ENCODE measurements at regions of chr12 and their contacts with region 1.

Region 1: DNA sequence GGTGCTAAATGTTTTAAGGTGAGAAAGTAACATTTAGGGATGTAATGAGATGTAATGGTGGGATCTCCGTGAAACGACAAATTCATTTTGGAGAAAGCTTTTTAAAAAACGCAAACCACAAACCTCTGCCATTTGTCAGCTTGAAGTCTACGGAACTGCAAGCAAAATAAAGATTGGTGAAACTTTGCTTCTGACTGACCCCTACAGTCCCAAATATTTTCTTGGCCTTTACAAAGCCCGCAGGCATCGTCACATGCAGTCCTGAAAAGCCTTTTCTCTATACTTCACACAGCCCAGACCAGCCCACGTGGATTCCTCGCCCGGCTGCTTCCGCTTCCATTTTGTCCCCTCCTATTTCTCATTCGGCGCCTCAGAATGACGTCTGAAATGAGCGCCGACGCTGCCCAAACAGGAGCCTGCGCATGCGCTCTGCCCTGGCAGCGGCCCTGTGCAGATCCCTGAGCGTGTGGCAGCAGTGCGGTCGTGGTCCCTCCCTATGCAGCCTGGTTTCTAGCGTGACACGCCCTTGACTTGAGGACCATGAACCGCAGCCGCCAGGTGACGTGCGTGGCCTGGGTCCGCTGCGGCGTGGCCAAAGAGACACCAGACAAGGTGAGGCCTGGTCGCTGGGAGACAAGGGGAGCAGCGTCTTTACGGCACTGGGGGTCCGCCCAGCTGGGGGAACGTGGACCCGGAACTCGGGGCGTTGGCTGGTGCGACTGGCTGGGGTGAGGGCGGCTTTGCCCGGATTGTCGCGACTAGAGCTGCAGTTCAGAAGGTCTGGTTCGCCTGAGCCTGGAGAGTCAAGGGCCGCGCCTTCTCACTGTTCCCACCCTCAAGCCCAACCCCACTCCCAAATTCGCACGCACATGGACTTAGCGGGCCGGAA is at the start of gene PWP1:
- DNase-seq: peak; percentile 91 to 99 (median 94)
- ATAC-seq: peak; percentile 90
- H3K4me3 ChIP-seq: peak within 1 kb of the TSS; percentile 99
- H3K4me3 Mint-ChIP-seq: peak within 1 kb of the TSS; percentile 97
- H3K27ac ChIP-seq: peak within 1 kb of the TSS; percentile 75 to 91
- H3K27ac Mint-ChIP-seq: peak within 1 kb of the TSS; percentile 94
- H3K4me1 ChIP-seq: peaks cover 24% of the 10 kb centered on the region
- H3K4me1 Mint-ChIP-seq: peaks cover 33% of the 10 kb centered on the region
- H3K27me3 ChIP-seq: no peaks in the 10 kb centered on the region
- H3K27me3 Mint-ChIP-seq: no peaks in the 10 kb centered on the region
- CTCF ChIP-seq: no peak
- total RNA-seq, gene PWP1: 24.1 to 24.2 TPM

Region 2: GRCh38 chr12:106247674-106248311 is 1437.8 kb before region 1 on chr12 and contains the start of gene CKAP4:
- CTCF ChIA-PET with region 1: no interaction called
- POLR2A ChIA-PET with region 1: no interaction called
- intact Hi-C with region 1: loop called in 1 of 2 experiments (anchors 10 kb)
- DNase-seq: peak; percentile 11 to 88 (median 54)
- ATAC-seq: peak; percentile 51
- H3K4me3 ChIP-seq: peak within 1 kb of the TSS; percentile 75
- H3K4me3 Mint-ChIP-seq: peak within 1 kb of the TSS; percentile 89
- H3K27ac ChIP-seq: peak within 1 kb of the TSS; percentile 81 to 89
- H3K27ac Mint-ChIP-seq: peak within 1 kb of the TSS; percentile 94
- H3K4me1 ChIP-seq: peaks cover 37% of the 10 kb centered on the region
- H3K4me1 Mint-ChIP-seq: peaks cover 43% of the 10 kb centered on the region
- H3K27me3 ChIP-seq: no peaks in the 10 kb centered on the region
- H3K27me3 Mint-ChIP-seq: no peaks in the 10 kb centered on the region
- CTCF ChIP-seq: no peak
- total RNA-seq, gene CKAP4: 14.7 to 15.7 TPM

Region 3: DNA sequence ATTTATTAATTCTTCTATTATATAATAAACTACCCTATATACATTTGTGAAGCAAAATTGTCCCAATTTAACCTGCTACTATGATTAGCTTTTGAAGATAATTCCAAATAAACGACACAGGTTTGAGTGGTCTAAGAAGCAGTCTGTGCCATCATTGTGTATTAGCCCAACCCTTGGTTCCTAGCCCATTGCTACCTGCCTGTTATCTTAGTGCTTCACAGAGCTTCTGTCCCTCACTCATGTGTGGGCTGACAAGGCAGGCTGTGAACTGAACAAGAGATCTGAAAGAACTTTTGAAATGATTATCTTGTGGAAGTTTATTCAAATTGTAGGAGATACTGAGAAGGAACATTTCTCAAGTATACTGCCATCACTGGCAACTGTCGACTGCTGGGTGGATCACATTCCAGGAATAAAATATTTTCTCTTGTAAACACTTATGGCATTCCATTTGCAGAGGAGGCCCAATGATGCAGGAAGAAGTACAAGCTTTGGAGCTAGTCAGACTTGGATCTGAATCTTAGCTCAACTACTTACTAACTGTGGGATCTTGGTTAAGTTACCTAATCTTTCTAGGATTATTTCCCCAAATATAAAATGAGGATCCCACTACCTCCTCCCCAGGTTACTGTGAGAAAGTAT is 690.9 kb before region 1 on chr12:
- CTCF ChIA-PET with region 1: no interaction called
- POLR2A ChIA-PET with region 1: no interaction called
- intact Hi-C with region 1: loop called in 1 of 2 experiments (anchors 5 kb)
- DNase-seq: no peak
- ATAC-seq: no peak
- H3K4me3 ChIP-seq: no peak overlapping the region
- H3K4me3 Mint-ChIP-seq: no peak overlapping the region
- H3K27ac ChIP-seq: no peak overlapping the region
- H3K27ac Mint-ChIP-seq: no peak overlapping the region
- H3K4me1 ChIP-seq: no peaks in the 10 kb centered on the region
- H3K4me1 Mint-ChIP-seq: no peaks in the 10 kb centered on the region
- H3K27me3 ChIP-seq: no peaks in the 10 kb centered on the region
- H3K27me3 Mint-ChIP-seq: no peaks in the 10 kb centered on the region
- CTCF ChIP-seq: no peak

Region 4: DNA sequence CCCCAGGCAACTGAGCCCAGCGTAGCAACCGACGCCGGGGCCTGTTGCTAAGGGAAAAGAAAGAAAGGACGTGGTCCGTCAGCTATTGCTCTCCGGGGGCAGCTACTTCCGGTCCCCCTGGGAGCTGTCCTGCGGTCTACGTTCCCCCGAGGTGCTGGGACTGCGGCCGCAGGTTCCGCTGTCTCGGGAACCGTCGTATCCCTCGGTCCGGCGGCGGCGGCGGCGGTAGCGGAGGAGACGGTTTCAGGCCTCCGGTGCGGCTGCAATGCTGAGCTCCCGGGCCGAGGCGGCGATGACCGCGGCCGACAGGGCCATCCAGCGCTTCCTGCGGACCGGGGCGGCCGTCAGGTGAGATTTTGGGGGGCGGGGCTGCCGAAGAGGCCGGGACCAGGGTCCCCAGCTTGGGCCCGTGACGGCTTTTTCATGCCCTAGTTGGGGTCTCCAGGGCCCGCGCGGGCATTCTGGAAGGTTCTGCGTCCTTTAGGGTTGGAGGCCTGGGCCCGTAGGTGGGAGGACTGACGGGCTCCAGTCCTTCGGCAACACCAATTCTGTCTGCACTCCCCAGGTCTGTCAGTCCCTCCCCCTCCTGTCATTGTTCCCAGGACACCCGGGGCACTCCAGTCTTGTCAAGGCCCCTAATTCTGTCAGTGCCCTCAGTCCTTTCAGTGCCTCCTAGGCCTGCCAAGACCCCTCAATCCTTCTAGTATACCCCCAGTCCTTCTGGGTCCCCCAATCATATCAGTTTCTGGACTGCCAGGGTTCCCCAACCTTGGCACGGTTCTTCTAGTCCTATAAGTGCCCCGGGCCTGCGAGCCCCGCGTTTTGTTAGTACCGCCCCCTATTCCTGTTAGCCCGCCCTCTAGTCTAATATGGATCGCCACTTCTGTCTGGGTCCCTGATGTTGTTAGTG is 1367.1 kb after region 1 on chr12 and contains the start of gene USP30:
- CTCF ChIA-PET with region 1: no interaction called
- POLR2A ChIA-PET with region 1: no interaction called
- intact Hi-C with region 1: loop called (anchors 1 to 10 kb)
- DNase-seq: peak; percentile 75 to 93 (median 81)
- ATAC-seq: peak; percentile 77
- H3K4me3 ChIP-seq: peak within 1 kb of the TSS; percentile 92
- H3K4me3 Mint-ChIP-seq: peak within 1 kb of the TSS; percentile 98
- H3K27ac ChIP-seq: peak within 1 kb of the TSS; percentile 87
- H3K27ac Mint-ChIP-seq: peak within 1 kb of the TSS; percentile 86
- H3K4me1 ChIP-seq: peaks cover 23% of the 10 kb centered on the region
- H3K4me1 Mint-ChIP-seq: peaks cover 13% of the 10 kb centered on the region
- H3K27me3 ChIP-seq: no peaks in the 10 kb centered on the region
- H3K27me3 Mint-ChIP-seq: no peaks in the 10 kb centered on the region
- CTCF ChIP-seq: no peak
- total RNA-seq, gene USP30: 21.8 to 23.0 TPM

Region 5: GRCh38 chr12:109573029-109573913 is 1887.7 kb after region 1 on chr12 and contains the starts of genes MMAB and MVK:
- CTCF ChIA-PET with region 1: no interaction called
- POLR2A ChIA-PET with region 1: no interaction called
- intact Hi-C with region 1: loop called in 1 of 2 experiments (anchors 10 kb)
- DNase-seq: peak; percentile 95 to 100 (median 98)
- ATAC-seq: peak; percentile 91
- H3K4me3 ChIP-seq: peak within 1 kb of the TSS; percentile 78
- H3K4me3 Mint-ChIP-seq: peak within 1 kb of the TSS; percentile 99
- H3K27ac ChIP-seq: peak within 1 kb of the TSS; percentile 83 to 96
- H3K27ac Mint-ChIP-seq: peak within 1 kb of the TSS; percentile 95
- H3K4me1 ChIP-seq: peaks cover 19% of the 10 kb centered on the region
- H3K4me1 Mint-ChIP-seq: peaks cover 29% of the 10 kb centered on the region
- H3K27me3 ChIP-seq: no peaks in the 10 kb centered on the region
- H3K27me3 Mint-ChIP-seq: no peaks in the 10 kb centered on the region
- CTCF ChIP-seq: no peak
- total RNA-seq, gene MMAB: 8.6 to 9.2 TPM
- total RNA-seq, gene MVK: 8.2 to 8.4 TPM

Measured in CD4-positive, alpha-beta T cell (primary cell).